ENCODE measurements at regions of chr3 and their contacts with region 1.

Region 1: DNA sequence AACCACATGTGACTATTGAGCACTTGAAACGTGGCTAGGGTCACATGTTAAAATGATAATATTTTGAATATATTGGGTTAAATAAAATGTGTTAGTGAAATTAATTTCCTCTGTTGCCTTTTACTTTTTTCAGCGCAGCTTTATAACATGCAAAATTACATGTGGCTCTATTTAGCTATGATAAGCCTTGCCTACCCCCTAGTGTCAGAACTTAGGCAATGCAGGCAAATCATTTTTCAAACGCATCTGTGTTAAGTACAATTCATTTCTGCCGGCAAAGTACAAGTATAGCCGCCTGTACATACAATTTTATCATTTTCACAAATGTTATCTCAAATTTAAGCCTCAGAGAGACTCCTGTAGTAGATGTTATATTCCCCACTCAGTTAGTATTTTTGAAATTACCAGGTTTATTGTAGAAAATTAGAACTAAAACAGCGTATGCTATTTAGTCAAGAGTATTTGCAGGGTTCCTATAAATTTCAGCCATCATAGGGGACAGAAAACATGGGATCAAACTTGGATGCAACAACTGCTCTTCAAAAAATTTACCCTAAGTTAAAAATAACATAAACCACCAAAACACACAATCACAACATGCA is 56.1 kb downstream of the TAFA4 start:
- DNase-seq: no peak
- ATAC-seq: peak in 2 of 4 donors; percentile 44 to 46
- H3K4me3 ChIP-seq: no peak overlapping the region
- H3K27ac ChIP-seq: no peak overlapping the region
- H3K4me1 ChIP-seq: no peaks in the 10 kb centered on the region
- H3K27me3 ChIP-seq: peaks cover 0 to 38% (median 0%) of the 10 kb centered on the region in 9 donors
- CTCF ChIP-seq: peak; percentile 70 to 91 (median 86)
- POLR2A ChIP-seq: no peak

Region 2: DNA sequence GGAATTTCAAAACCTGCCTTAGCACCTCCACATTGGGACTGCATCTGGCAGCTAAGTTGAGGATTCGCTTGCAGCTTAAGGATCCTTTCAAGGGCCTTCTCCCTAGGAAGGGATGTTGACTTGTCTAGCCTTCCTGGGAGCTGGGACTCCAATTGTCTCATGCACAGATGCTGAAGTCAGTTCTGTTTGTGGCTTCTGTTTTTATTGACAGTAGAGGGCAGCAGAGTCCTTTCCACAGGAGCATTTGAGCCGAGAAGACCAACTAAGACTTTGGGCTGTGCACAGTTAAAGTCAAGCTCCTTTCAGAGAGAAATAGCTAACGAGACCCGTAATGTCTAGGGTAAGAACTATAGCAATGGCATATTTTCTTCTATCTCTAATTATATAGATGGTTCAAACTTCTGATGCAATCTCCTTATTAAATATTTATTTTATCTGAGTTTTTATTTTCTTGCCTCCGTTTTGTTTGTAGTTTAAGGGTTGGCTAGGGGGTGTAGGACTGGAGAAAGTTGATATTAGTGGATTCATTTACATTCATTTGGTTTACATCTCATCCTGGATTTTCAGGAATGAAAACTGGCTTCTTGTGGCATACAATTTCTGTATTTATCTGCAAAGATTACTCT is 1937.8 kb before region 1 on chr3:
- intact Hi-C with region 1: loop called in 2 of 10 experiments (anchors 10 kb)
- DNase-seq: no peak
- ATAC-seq: peak in 3 of 4 donors; percentile 67 to 71 (median 71)
- H3K4me3 ChIP-seq: no peak overlapping the region
- H3K27ac ChIP-seq: no peak overlapping the region
- H3K4me1 ChIP-seq: no peaks in the 10 kb centered on the region
- H3K27me3 ChIP-seq: peaks cover 0 to 25% (median 0%) of the 10 kb centered on the region in 9 donors
- CTCF ChIP-seq: peak; percentile 51 to 78 (median 70)
- POLR2A ChIP-seq: no peak

Region 3: GRCh38 chr3:66971891-66972551 is 1904.2 kb before region 1 on chr3:
- intact Hi-C with region 1: loop called in 3 of 10 experiments (anchors 10 kb)
- DNase-seq: peak; percentile 68 to 76 (median 72)
- ATAC-seq: peak; percentile 93 to 100 (median 98)
- H3K4me3 ChIP-seq: peak overlapping the region in 10 of 12 donors; percentile 6 to 54 (median 46)
- H3K27ac ChIP-seq: peak overlapping the region in 3 of 12 donors; percentile 22 to 47 (median 30)
- H3K4me1 ChIP-seq: peaks cover 0 to 12% (median 5%) of the 10 kb centered on the region in 12 donors
- H3K27me3 ChIP-seq: peaks cover 0 to 1% (median 0%) of the 10 kb centered on the region in 9 donors
- CTCF ChIP-seq: peak; percentile 70 to 90 (median 82)
- POLR2A ChIP-seq: no peak

Region 4: DNA sequence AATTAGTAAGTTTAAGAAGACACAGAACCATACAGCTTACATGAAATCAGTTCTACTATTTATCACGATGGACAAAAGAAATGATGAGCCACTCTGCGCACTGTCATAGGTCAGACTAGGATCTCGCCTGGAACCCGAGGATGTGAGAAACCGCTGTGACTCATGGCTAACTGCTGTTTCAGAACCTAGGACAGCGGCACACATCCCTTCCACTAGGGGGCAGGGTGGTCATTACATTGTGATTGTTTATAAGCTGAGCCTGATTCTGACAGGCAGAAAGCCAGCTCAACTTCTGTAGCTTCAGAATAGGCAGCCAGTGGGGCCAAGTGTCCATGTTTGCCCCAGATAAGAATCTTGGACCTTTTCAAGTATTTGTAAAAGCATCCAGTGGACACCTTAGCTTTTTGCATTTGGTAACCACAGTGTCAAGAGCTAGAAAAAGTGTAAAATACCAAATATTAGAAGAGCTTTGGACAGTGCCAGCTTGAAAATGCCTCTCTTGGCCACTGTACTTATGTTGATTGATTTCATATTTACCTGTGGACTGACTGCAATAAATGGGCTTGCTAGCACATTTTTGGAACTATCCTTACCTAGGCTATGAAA is 1762.3 kb before region 1 on chr3:
- intact Hi-C with region 1: loop called in 8 of 10 experiments (anchors 5 kb)
- DNase-seq: peak; percentile 54 to 61 (median 58)
- ATAC-seq: peak; percentile 55 to 87 (median 80)
- H3K4me3 ChIP-seq: no peak overlapping the region
- H3K27ac ChIP-seq: no peak overlapping the region
- H3K4me1 ChIP-seq: no peaks in the 10 kb centered on the region
- H3K27me3 ChIP-seq: peaks cover 0 to 17% (median 0%) of the 10 kb centered on the region in 9 donors
- CTCF ChIP-seq: peak; percentile 69 to 88 (median 80)
- POLR2A ChIP-seq: no peak

Region 5: DNA sequence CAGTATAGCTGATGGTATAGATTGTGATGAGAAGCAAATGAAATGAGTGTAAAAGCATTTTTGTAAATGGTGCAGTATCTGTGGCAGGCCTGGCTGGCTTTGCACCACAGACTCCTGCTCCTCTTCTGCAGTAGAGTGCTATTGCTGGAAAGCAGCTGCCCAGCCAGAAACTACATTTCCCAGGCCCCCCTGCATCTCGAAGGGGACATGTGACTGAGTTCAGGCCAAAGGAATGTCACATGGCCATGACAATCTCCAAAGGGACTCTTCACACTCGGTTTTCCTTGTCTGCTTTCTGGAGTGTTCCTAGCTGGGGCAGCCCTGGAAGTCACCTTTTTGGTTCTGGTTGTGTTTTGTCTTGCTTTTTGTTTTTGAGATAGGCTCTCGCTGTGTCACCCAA is 1498.9 kb before region 1 on chr3:
- intact Hi-C with region 1: loop called in 5 of 10 experiments (anchors 5 to 10 kb)
- DNase-seq: no peak
- ATAC-seq: peak in 3 of 4 donors; percentile 22 to 60 (median 34)
- H3K4me3 ChIP-seq: no peak overlapping the region
- H3K27ac ChIP-seq: no peak overlapping the region
- H3K4me1 ChIP-seq: peaks cover 0 to 7% (median 0%) of the 10 kb centered on the region in 12 donors
- H3K27me3 ChIP-seq: no peaks in the 10 kb centered on the region
- CTCF ChIP-seq: no peak
- POLR2A ChIP-seq: no peak

Region 6: DNA sequence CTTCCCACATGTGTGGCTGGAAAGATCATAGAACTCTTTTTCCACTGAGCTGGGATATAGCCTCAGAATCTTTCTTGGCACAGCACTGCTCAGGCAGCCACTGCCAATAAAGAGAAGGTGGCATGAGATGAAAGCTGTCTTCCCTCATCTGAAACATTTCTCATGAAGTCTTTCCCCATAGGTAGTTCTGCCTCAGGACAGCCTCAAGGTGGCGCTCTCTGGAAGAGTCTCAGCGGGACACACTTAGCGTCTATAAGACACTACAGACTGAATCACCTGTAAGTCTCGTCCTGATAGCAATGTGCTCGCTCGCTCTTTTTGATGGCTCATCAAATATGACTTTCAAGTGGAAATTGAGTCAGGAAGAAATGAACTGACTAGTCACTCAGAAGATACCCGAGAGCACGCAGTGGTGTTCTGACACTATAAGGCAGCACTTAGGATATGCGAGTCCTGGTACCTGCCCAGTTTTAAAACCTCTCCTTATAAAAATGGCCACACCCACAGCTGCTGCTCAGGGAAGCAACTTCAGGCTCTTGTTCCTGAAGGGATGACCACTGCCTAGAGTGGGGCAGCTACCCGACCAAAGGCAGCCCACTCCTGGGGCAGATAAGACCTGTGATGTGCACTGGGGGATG is 1491.3 kb before region 1 on chr3:
- intact Hi-C with region 1: loop called in 5 of 10 experiments (anchors 5 to 10 kb)
- DNase-seq: peak in 2 of 5 donors; percentile 25 to 44
- ATAC-seq: peak; percentile 54 to 84 (median 68)
- H3K4me3 ChIP-seq: no peak overlapping the region
- H3K27ac ChIP-seq: no peak overlapping the region
- H3K4me1 ChIP-seq: peaks cover 0 to 35% (median 11%) of the 10 kb centered on the region in 12 donors
- H3K27me3 ChIP-seq: no peaks in the 10 kb centered on the region
- CTCF ChIP-seq: peak; percentile 24 to 56 (median 40)
- POLR2A ChIP-seq: no peak

Region 7: GRCh38 chr3:67819447-67819846 is 1056.8 kb before region 1 on chr3:
- intact Hi-C with region 1: loop called in 5 of 10 experiments (anchors 5 to 10 kb)
- DNase-seq: no peak
- ATAC-seq: no peak
- H3K4me3 ChIP-seq: no peak overlapping the region
- H3K27ac ChIP-seq: no peak overlapping the region
- H3K4me1 ChIP-seq: no peaks in the 10 kb centered on the region
- H3K27me3 ChIP-seq: no peaks in the 10 kb centered on the region
- CTCF ChIP-seq: peak in 7 of 12 donors; percentile 12 to 36 (median 17)
- POLR2A ChIP-seq: no peak

Region 8: DNA sequence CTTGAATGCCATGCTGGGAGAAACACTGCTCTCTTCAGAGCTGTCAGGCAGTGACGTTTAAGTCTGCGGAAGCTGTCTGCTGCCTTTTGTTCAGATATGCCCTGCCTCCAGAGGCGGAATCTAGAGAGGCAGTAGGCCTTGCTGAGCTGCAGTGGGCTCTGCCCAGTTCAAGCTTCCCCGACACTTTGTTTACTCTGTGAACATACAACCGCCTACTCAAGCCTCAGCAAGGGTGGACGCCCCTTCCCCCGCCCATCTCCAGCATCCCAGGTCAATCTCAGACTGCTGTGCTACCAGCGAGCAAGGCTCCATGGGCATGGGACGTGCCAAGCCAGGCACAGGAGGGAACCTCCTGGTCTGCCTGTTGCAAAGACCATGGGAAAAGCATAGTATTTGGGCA is 43.5 kb before region 1 on chr3:
- intact Hi-C with region 1: no loop called
- DNase-seq: no peak
- ATAC-seq: no peak
- H3K4me3 ChIP-seq: no peak overlapping the region
- H3K27ac ChIP-seq: no peak overlapping the region
- H3K4me1 ChIP-seq: no peaks in the 10 kb centered on the region
- H3K27me3 ChIP-seq: peaks cover 0 to 5% (median 0%) of the 10 kb centered on the region in 9 donors
- CTCF ChIP-seq: no peak
- POLR2A ChIP-seq: no peak

Region 9: GRCh38 chr3:69761896-69762767 is 885.9 kb after region 1 on chr3:
- intact Hi-C with region 1: no loop called
- DNase-seq: no peak
- ATAC-seq: peak in 1 of 4 donors; percentile 27
- H3K4me3 ChIP-seq: no peak overlapping the region
- H3K27ac ChIP-seq: peak overlapping the region in 4 of 12 donors; percentile 12 to 70 (median 29)
- H3K4me1 ChIP-seq: peaks cover 0 to 72% (median 54%) of the 10 kb centered on the region in 12 donors
- H3K27me3 ChIP-seq: no peaks in the 10 kb centered on the region
- CTCF ChIP-seq: no peak
- POLR2A ChIP-seq: no peak